OCI-LY7 (cell line): ENCODE measurements at regions of chr2 and their contacts with region 1.

Region 1: GRCh38 chr2:78887446-78887845 is 138.1 kb upstream of the REG3G start:
- DNase-seq: peak; percentile 82
- H3K4me3 ChIP-seq: peak overlapping the region; percentile 53
- H3K27ac ChIP-seq: peak overlapping the region; percentile 85
- H3K4me1 ChIP-seq: peaks cover 45% of the 10 kb centered on the region
- CTCF ChIP-seq: no peak

Region 2: DNA sequence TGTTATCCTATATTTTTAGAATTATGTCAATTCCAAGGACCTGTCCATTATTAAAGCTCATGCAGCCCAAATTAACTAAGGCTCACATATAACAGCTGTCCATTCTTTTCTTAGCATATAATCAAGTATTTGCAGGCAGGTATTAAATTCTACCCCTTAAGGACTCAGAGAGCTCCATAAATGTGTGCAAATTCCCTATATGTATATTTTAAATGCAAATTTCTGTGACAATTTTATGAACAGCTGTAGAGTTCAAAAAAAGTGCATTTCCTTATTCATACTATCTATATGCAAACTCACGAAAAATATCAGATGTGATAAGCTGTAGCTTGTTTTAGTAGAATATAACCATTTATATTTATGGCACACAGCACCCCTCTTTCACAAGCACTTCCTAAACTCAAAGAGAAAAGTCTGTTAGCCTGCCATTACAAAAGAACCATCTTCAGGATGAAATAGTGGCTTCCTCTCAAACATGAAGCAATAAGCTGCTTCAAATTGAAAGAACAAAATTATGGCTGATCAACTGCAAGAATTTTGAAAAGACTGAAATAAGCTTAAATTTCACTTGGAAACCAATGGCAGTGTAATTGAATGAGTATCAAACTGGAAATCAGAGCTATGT is 17.0 kb before region 1 on chr2:
- CTCF ChIA-PET with region 1: no interaction called
- POLR2A ChIA-PET with region 1: interaction called, 21 read pairs
- intact Hi-C with region 1: no loop called
- DNase-seq: no peak
- H3K4me3 ChIP-seq: no peak overlapping the region
- H3K27ac ChIP-seq: no peak overlapping the region
- H3K4me1 ChIP-seq: no peaks in the 10 kb centered on the region
- CTCF ChIP-seq: no peak

Region 3: GRCh38 chr2:79223539-79223938 is 336.1 kb after region 1 on chr2:
- CTCF ChIA-PET with region 1: no interaction called
- POLR2A ChIA-PET with region 1: no interaction called
- intact Hi-C with region 1: no loop called
- DNase-seq: no peak
- H3K4me3 ChIP-seq: no peak overlapping the region
- H3K27ac ChIP-seq: no peak overlapping the region
- H3K4me1 ChIP-seq: no peaks in the 10 kb centered on the region
- CTCF ChIP-seq: peak; percentile 38; the same call in 1 of the 2 replicates